Transverse colon (tissue), 4 donors: ENCODE measurements at regions of chr14 and their contacts with region 1.

Region 1: GRCh38 chr14:65421201-65421981 is 8.9 kb downstream of the FUT8 start:
- DNase-seq: no peak
- H3K4me3 ChIP-seq: no peak overlapping the region
- H3K27ac ChIP-seq: no peak overlapping the region
- H3K4me1 ChIP-seq: peaks cover 0 to 12% (median 3%) of the 10 kb centered on the region in 4 donors
- H3K27me3 ChIP-seq: no peaks in the 10 kb centered on the region
- CTCF ChIP-seq: no peak
- EP300 ChIP-seq: no peak
- POLR2A ChIP-seq: no peak

Region 2: GRCh38 chr14:65434214-65434850 is 12.9 kb after region 1 on chr14:
- in situ Hi-C with region 1: no loop called
- intact Hi-C with region 1: no loop called
- DNase-seq: no peak
- H3K4me3 ChIP-seq: no peak overlapping the region
- H3K27ac ChIP-seq: no peak overlapping the region
- H3K4me1 ChIP-seq: peaks cover 0 to 3% (median 0%) of the 10 kb centered on the region in 4 donors
- H3K27me3 ChIP-seq: no peaks in the 10 kb centered on the region
- CTCF ChIP-seq: no peak
- EP300 ChIP-seq: no peak
- POLR2A ChIP-seq: no peak

Region 3: GRCh38 chr14:65824285-65824977 is 403.0 kb after region 1 on chr14:
- in situ Hi-C with region 1: loop called in 2 of 4 experiments (anchors 10 kb)
- intact Hi-C with region 1: no loop called
- DNase-seq: peak; percentile 61
- H3K4me3 ChIP-seq: no peak overlapping the region
- H3K27ac ChIP-seq: no peak overlapping the region
- H3K4me1 ChIP-seq: peaks cover 0 to 4% (median 0%) of the 10 kb centered on the region in 4 donors
- H3K27me3 ChIP-seq: no peaks in the 10 kb centered on the region
- CTCF ChIP-seq: peak; percentile 91 to 95 (median 92)
- EP300 ChIP-seq: no peak
- POLR2A ChIP-seq: no peak

Region 4: GRCh38 chr14:65832431-65833266 is 411.3 kb after region 1 on chr14:
- in situ Hi-C with region 1: loop called in 3 of 4 experiments (anchors 10 kb)
- intact Hi-C with region 1: no loop called
- DNase-seq: no peak
- H3K4me3 ChIP-seq: no peak overlapping the region
- H3K27ac ChIP-seq: no peak overlapping the region
- H3K4me1 ChIP-seq: peaks cover 0 to 4% (median 0%) of the 10 kb centered on the region in 4 donors
- H3K27me3 ChIP-seq: no peaks in the 10 kb centered on the region
- CTCF ChIP-seq: no peak
- EP300 ChIP-seq: no peak
- POLR2A ChIP-seq: no peak